MCF 10A (cell line): ENCODE measurements at regions of chr2 and their contacts with region 1.

Region 1: DNA sequence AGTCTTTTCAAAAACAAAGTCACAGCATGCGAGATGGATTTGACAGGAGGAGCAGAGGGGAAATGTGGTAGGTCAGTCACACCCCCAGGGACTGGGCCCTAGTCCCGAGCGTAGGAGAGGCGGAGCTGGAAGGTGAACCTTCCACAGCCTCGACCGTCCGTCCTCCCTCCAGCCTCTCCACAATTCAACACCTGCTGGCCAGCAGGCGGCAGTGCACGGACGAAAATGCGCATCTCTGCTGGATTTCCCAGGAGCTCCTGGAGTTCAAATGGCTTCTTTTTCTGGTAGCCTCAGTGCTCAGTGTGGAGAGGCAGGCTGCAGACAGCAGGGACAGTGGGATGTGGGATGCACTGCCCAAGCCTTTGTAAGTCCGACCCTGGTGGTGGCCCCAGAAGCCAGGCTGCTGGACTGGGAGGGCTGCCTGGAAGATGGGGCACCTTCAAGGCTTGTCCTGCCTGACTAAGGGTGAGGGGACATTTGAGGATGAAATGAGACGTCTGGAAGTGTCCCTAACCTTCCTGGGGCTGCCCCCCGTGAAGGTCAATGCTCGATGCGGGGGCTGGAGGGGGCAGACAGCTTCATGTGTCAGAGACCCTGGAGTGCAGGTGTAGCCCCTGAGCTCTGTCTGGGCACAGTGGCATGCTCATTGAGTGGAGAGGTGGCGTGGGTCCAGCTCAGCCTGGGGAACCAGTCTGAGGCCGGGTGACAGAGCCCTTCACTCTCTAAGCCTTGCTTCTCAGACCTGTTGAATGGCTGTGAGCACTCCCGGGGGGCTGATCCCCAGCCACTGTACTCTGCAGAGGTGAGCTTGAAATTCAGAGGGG is 189.5 kb downstream of the TFCP2L1 start:
- DNase-seq: peak; percentile 81
- H3K4me3 Mint-ChIP-seq: no peak overlapping the region
- H3K27ac Mint-ChIP-seq: no peak overlapping the region
- H3K4me1 Mint-ChIP-seq: peaks cover 26% of the 10 kb centered on the region
- H3K27me3 Mint-ChIP-seq: no peaks in the 10 kb centered on the region
- CTCF ChIP-seq: peak; percentile 94

Region 2: DNA sequence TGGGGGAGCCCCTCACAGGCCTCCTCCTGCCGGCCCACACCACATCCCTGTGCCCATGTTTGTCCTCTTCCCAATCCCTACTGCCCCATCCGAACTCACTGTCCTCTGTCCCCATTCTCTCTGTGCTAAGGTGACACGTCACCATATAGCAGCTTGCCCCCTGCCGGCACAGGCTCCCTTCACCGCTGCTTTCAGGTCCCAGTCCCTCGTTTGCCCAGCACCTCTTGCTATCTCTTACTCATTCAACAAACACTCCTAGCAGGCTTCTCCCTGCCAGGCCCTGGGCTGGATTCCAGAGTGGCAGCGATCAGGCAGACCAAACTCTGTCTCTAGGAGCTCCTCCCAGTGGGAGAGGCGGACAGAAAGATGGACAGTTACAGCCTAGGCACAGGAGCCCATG is 115.2 kb after region 1 on chr2:
- CTCF ChIA-PET with region 1: interaction called, 12 read pairs
- POLR2A ChIA-PET with region 1: interaction called, 3 read pairs
- intact Hi-C with region 1: loop called (anchors 10 kb)
- DNase-seq: peak; percentile 87
- H3K4me3 Mint-ChIP-seq: peak overlapping the region; percentile 6
- H3K27ac Mint-ChIP-seq: peak overlapping the region; percentile 74
- H3K4me1 Mint-ChIP-seq: peaks cover 22% of the 10 kb centered on the region
- H3K27me3 Mint-ChIP-seq: no peaks in the 10 kb centered on the region
- CTCF ChIP-seq: no peak

Region 3: DNA sequence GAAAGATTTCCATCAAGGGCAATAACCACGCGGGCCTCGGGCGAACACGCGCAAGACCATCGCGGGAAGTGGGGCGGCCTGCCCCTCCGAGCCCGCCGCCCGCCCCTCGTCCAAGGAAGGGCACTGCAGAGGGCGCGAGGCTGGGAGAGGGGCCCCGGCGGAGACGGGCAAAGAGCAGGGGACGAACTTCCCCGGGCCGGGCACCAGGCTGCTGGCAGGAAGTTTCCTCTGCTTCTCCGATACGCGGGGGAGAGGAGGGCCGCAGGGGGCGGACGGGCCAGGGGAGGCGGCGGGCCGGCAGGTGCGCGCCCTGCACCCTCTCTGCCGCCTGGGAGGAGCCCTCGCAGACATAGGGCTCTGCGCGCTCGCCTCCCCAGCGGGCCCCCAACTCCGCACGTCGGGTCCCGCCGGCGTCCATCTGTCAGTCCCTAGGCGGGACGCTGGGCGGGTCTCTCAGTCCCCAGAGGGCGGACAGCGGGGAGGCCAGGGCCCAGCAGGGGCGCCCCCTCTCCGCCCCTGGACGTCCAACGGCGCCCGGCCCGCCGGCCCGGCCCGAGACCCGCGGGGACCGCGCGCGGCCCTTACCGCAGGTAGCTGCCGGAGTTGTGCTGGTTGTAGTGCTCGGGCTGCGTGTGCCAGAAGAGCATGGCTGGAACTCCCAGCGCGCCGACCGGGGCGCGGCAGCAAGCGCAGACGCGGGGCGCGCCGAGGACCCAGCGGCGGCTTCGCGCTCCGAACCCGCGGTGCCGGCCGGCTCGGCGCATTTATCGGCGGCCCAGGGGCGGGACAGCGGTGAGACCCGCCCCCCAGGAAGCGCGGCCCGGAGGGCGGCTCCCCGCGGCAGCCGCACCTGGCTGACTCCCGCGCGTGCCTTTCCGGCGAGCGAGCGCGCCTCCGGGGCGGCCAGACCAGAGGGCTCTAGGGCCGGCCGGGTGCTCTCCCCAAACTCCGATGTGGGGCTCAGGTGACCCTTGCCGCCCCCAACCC is 189.3 kb after region 1 on chr2 and contains the start of gene TFCP2L1:
- CTCF ChIA-PET with region 1: interaction called, 4 read pairs
- POLR2A ChIA-PET with region 1: interaction called, 4 read pairs
- intact Hi-C with region 1: loop called (anchors 2 kb)
- DNase-seq: peak; percentile 61
- H3K4me3 Mint-ChIP-seq: peak within 1 kb of the TSS; percentile 97
- H3K27ac Mint-ChIP-seq: peak within 1 kb of the TSS; percentile 98
- H3K4me1 Mint-ChIP-seq: peaks cover 22% of the 10 kb centered on the region
- H3K27me3 Mint-ChIP-seq: no peaks in the 10 kb centered on the region
- CTCF ChIP-seq: no peak
- total RNA-seq, gene TFCP2L1: 22.6 and 24.3 TPM in 2 replicates

Region 4: GRCh38 chr2:121324601-121325000 is 229.1 kb after region 1 on chr2:
- CTCF ChIA-PET with region 1: interaction called, 18 read pairs
- POLR2A ChIA-PET with region 1: no interaction called
- intact Hi-C with region 1: no loop called
- DNase-seq: no peak
- H3K4me3 Mint-ChIP-seq: no peak overlapping the region
- H3K27ac Mint-ChIP-seq: no peak overlapping the region
- H3K4me1 Mint-ChIP-seq: no peaks in the 10 kb centered on the region
- H3K27me3 Mint-ChIP-seq: no peaks in the 10 kb centered on the region
- CTCF ChIP-seq: no peak

Region 5: GRCh38 chr2:121356058-121356640 is 260.7 kb after region 1 on chr2:
- CTCF ChIA-PET with region 1: interaction called, 356 read pairs
- POLR2A ChIA-PET with region 1: interaction called, 32 read pairs
- intact Hi-C with region 1: loop called (anchors 1 kb)
- DNase-seq: peak; percentile 81
- H3K4me3 Mint-ChIP-seq: no peak overlapping the region
- H3K27ac Mint-ChIP-seq: peak overlapping the region; percentile 39
- H3K4me1 Mint-ChIP-seq: peaks cover 23% of the 10 kb centered on the region
- H3K27me3 Mint-ChIP-seq: no peaks in the 10 kb centered on the region
- CTCF ChIP-seq: peak; percentile 62